Ascending aorta (tissue), 2 donors: ENCODE measurements at regions of chr11 and their contacts with region 1.

Region 1: DNA sequence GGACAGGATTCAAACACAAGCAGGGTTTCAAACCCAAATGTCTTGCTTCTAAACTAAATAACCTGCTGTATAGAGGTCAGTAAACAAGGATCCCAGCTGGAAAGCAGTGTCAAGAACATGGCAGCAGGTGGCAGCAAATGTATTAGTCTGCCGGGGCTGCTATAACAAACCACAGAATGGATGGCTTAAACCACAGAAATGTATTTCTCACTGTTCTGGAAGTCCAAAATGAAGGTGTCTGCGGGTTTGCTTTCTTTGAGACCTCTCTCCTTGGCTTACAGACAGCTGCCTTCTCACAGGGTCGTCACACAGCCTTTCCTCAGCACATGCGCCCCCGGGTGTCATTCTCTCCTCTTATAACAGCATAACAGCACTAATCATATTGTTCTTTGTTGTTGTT is 65.1 kb upstream of the LRRC55 start:
- DNase-seq: no peak
- H3K4me3 ChIP-seq: no peak overlapping the region
- H3K27ac ChIP-seq: no peak overlapping the region
- H3K4me1 ChIP-seq: no peaks in the 10 kb centered on the region
- H3K27me3 ChIP-seq: no peaks in the 10 kb centered on the region
- CTCF ChIP-seq: peak in 2 of 3 experiments; percentile 30 to 40

Region 2: GRCh38 chr11:57055764-57056163 is 60.9 kb before region 1 on chr11:
- intact Hi-C with region 1: loop called (anchors 10 kb)
- DNase-seq: no peak
- H3K4me3 ChIP-seq: no peak overlapping the region
- H3K27ac ChIP-seq: no peak overlapping the region
- H3K4me1 ChIP-seq: no peaks in the 10 kb centered on the region
- H3K27me3 ChIP-seq: no peaks in the 10 kb centered on the region
- CTCF ChIP-seq: no peak

Region 3: DNA sequence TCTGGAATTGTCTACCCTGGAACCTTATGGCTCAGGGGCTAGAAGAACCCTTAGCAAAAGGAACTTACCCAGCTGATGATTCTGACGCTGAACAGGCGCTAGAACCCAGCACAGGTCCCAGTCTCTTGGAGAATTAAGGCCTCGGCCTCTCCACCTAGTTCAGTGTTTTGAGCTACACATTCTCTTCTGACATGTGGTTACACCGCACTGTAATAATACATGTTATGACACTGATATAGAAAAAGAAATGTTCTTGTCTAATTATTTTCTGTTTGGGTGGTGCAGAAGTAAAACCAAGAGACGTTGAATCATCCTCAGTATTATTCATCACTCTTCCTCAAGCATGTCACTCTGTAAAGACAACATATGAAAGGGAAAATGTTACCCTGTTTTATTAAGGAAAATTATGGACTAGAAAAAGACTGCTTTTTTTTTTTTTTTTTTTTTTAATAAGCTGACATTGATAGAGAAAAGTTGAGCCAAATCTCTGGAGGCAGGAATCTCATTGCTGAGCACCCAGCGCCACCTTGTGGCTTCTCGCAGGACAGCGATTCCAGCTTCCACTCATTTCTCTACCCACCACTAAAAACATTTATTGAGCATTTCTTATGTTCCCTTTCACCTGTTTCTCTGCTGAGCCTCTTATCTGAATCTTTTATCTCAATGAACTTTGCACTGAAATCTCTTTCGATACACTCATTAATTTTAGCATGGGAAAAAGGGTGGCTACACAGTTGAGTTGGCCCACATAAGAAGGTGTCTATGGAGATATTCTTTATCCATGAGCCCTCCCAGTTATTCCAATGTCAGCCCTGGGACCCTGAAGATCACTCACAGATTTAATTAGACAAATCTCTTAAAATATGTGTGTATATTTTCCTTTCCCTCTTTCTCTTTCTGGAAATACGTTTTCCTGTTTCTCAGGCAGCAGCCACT is 133.0 kb after region 1 on chr11:
- intact Hi-C with region 1: loop called (anchors 5 kb)
- DNase-seq: no peak
- H3K4me3 ChIP-seq: no peak overlapping the region
- H3K27ac ChIP-seq: no peak overlapping the region
- H3K4me1 ChIP-seq: no peaks in the 10 kb centered on the region
- H3K27me3 ChIP-seq: no peaks in the 10 kb centered on the region
- CTCF ChIP-seq: peak; percentile 58 to 77 (median 76)

Region 4: GRCh38 chr11:57345555-57346211 is 229.0 kb after region 1 on chr11:
- intact Hi-C with region 1: no loop called
- DNase-seq: peak in 1 of 2 donors; percentile 82
- H3K4me3 ChIP-seq: no peak overlapping the region
- H3K27ac ChIP-seq: no peak overlapping the region
- H3K4me1 ChIP-seq: no peaks in the 10 kb centered on the region
- H3K27me3 ChIP-seq: no peaks in the 10 kb centered on the region
- CTCF ChIP-seq: peak; percentile 49 to 79 (median 64)